ENCODE measurements at regions of chr11 and their contacts with region 1.

Region 1: DNA sequence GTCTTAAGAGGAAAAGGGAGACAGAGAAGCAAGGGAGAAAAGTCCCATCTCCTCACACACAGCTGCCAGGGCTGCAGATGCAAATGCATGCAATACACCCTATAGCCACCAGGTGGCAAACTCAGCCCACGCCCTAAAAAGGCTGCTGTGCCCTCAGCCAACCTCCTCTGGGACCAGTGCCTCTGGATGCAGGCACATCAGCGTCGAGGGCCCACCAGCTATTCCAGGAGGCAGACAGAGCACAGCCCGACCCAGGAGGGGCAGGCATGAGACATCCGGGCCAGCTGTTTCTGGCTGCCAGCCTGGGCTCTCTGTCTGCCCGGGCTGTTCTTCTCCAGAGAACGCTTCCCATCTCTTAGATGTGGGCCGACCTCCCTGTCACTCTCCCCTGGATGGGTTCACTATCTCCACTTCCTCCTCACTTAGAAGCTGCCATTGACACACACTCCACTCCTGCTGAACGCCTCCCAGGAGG is 39.7 kb downstream of the TPBGL start:
- DNase-seq: peak; percentile 69 to 86 (median 82)
- ATAC-seq: peak; percentile 77 to 90 (median 84)
- H3K4me3 ChIP-seq: no peak overlapping the region
- H3K27ac ChIP-seq: peak overlapping the region in 6 of 12 donors; percentile 2 to 43 (median 22)
- H3K4me1 ChIP-seq: peaks cover 0 to 31% (median 14%) of the 10 kb centered on the region in 12 donors
- H3K27me3 ChIP-seq: no peaks in the 10 kb centered on the region
- CTCF ChIP-seq: peak; percentile 93 to 100 (median 99)
- POLR2A ChIP-seq: no peak

Region 2: DNA sequence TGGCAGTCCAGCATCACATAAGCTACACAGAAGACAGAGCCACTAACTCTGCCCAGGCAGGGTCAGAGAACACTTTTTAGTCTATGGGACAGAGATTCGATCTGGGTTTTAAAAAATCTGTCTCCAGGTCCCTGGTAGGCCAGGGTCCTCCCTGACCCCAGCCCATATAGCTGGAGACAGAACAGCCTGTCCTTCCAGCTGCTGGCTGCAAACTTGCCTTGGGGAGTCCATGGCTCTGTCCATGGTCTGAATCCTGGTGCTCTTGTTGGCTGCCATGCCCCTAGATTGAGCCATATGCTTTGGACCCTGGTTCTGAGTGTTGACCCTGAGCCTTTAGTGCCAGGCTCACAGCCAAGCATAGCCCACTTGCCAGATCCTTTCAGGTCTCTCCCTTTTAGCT is 773.4 kb before region 1 on chr11:
- intact Hi-C with region 1: no loop called
- DNase-seq: no peak
- ATAC-seq: no peak
- H3K4me3 ChIP-seq: no peak overlapping the region
- H3K27ac ChIP-seq: no peak overlapping the region
- H3K4me1 ChIP-seq: no peaks in the 10 kb centered on the region
- H3K27me3 ChIP-seq: no peaks in the 10 kb centered on the region
- CTCF ChIP-seq: no peak
- POLR2A ChIP-seq: no peak

Region 3: DNA sequence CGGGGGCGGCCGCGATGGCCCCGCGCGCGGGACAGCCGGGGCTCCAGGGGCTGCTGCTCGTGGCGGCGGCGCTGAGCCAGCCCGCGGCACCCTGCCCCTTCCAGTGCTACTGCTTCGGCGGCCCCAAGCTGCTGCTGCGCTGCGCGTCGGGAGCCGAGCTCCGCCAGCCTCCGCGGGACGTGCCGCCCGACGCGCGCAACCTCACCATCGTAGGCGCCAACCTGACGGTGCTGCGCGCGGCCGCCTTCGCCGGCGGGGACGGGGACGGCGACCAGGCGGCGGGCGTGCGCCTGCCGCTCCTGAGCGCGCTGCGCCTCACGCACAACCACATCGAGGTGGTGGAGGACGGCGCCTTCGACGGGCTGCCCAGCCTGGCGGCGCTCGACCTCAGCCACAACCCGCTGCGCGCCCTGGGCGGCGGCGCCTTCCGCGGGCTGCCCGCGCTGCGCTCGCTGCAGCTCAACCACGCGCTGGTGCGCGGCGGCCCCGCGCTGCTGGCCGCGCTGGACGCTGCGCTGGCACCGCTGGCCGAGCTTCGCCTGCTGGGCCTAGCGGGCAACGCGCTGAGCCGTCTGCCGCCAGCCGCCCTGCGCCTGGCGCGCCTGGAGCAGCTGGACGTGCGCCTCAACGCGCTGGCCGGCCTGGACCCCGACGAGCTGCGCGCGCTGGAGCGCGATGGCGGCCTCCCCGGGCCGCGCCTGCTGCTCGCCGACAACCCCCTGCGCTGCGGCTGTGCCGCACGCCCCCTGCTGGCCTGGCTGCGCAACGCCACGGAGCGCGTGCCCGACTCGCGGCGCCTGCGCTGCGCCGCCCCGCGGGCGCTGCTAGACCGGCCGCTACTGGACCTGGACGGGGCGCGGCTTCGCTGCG is 39.0 kb before region 1 on chr11:
- intact Hi-C with region 1: no loop called
- DNase-seq: peak; percentile 82 to 95 (median 84)
- ATAC-seq: peak; percentile 56 to 97 (median 92)
- H3K4me3 ChIP-seq: peak overlapping the region; percentile 7 to 60 (median 44)
- H3K27ac ChIP-seq: no peak overlapping the region
- H3K4me1 ChIP-seq: peaks cover 0 to 21% (median 5%) of the 10 kb centered on the region in 12 donors
- H3K27me3 ChIP-seq: peaks cover 21 to 59% (median 34%) of the 10 kb centered on the region in 9 donors
- CTCF ChIP-seq: peak; percentile 29 to 99 (median 88)
- POLR2A ChIP-seq: no peak

Region 4: GRCh38 chr11:75319035-75319877 is 39.0 kb after region 1 on chr11:
- intact Hi-C with region 1: loop called in 2 of 10 experiments (anchors 5 kb)
- DNase-seq: peak in 2 of 5 donors; percentile 25 to 42
- ATAC-seq: no peak
- H3K4me3 ChIP-seq: no peak overlapping the region
- H3K27ac ChIP-seq: peak overlapping the region in 1 of 12 donors; percentile 37
- H3K4me1 ChIP-seq: peaks cover 0 to 47% (median 22%) of the 10 kb centered on the region in 12 donors
- H3K27me3 ChIP-seq: no peaks in the 10 kb centered on the region
- CTCF ChIP-seq: no peak
- POLR2A ChIP-seq: no peak

Region 5: DNA sequence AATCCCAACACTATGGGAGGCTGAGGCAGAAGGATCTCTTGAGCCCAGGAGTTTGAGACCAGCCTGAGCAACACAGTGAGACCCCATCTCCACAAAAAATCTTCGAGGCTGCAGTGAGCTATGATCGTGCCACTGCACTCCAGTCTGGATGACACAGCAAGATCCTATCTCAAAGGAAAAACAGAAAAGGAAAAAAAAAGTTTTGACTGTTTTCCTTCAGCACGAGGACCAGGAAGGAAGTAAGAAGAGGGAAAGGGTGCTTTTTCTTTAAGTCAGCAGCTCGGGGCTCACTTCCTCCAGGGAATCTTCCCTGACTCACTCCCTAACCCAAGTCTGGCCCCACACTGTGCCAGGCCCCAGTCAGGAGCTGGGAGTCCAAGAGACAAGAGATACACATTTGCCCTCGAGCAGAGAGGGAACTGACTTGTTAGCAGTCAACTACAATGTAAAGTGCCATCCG is 57.0 kb after region 1 on chr11:
- intact Hi-C with region 1: loop called in 1 of 10 experiments (anchors 5 kb)
- DNase-seq: peak in 1 of 5 donors; percentile 65
- ATAC-seq: peak in 3 of 4 donors; percentile 10 to 19 (median 14)
- H3K4me3 ChIP-seq: no peak overlapping the region
- H3K27ac ChIP-seq: peak overlapping the region in 6 of 12 donors; percentile 8 to 96 (median 67)
- H3K4me1 ChIP-seq: peaks cover 25 to 100% (median 70%) of the 10 kb centered on the region in 12 donors
- H3K27me3 ChIP-seq: no peaks in the 10 kb centered on the region
- CTCF ChIP-seq: no peak
- POLR2A ChIP-seq: no peak

Region 6: DNA sequence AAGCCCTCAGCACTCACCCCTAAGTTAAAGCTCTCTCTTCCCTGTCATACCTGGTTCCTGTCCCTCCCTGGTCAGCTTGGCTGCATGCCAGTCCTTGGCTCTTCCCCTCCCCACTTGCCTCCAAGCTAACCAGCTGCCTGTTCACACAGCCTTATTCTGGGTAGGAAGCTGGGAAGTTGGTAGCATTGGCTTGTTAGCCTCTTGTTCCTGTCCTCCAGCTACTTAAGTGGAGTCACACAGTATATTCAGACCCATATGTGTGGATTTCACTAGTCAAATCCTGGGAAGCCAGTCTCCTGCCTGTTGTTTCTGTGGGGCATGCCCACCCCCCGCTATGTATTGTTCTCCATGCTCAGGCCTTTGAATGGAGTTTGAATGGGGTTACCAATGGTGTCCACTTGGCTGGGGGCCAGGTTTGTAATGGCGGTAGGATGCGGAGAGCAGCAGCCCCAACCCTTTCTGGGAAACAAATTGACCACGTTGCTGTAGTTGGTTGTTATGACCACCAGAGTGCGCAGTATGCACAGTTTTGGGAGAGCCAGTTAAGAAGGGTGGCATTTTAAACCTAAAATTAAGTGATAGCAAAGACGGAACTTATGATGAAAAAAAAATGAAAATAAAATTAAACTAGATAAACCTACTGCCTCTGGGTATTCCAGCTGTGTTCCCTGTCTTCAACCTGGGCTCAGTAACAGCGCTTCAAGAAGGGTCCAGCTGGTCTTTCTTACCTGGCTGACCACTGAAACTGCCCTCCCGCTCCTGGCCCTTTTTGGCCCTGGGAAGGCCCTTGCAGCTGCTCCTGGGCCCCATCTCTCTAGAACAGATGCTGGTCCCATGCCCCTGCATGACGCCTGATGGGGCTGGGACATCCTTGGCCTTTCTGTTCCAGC is 108.4 kb after region 1 on chr11:
- intact Hi-C with region 1: loop called (anchors 1 to 2 kb)
- DNase-seq: peak; percentile 54 to 77 (median 68)
- ATAC-seq: peak; percentile 35 to 76 (median 72)
- H3K4me3 ChIP-seq: no peak overlapping the region
- H3K27ac ChIP-seq: no peak overlapping the region
- H3K4me1 ChIP-seq: peaks cover 0 to 23% (median 5%) of the 10 kb centered on the region in 12 donors
- H3K27me3 ChIP-seq: peaks cover 0 to 4% (median 0%) of the 10 kb centered on the region in 9 donors
- CTCF ChIP-seq: peak; percentile 75 to 88 (median 80)
- POLR2A ChIP-seq: no peak

Region 7: DNA sequence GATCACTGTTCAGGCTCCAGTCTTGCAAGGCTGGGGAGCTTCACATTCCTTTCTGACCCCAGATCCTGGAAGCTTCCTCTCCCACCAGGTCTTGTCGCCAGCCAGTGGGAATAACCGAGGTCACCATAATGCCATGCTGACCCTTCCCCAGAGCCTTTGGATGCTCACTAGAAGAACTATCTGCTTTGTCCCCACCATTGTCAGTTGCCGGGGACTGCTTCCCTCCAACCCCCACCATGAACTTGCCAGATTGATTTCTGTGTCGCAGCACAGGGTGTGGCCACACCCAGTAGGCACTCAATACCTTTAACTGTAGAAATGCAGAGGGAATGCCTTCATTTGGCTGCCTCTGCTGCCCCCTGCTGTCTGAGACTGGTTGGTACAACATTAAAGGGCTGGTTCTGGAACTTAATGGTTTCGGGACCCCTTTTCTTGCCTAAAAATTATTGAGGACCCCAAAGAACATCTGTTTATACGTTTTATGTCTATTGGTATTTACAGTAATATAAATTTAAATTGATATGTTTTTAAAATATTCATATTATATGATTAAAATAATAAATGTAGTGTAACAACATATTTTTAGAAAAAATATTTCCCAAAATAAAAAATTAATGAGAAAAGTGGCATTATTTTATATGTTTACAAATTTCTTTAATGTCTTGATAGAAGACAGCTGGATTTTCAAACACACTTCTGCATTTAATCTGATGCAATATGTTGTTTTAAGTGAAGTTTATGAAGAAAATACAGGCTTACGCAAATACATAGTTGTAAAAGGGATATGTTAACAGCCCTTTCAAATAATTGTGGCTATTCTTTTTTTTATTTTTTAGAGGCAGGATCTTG is 252.2 kb after region 1 on chr11:
- intact Hi-C with region 1: loop called in 5 of 10 experiments (anchors 5 to 10 kb)
- DNase-seq: peak in 4 of 5 donors; percentile 54 to 77 (median 62)
- ATAC-seq: peak; percentile 28 to 58 (median 56)
- H3K4me3 ChIP-seq: no peak overlapping the region
- H3K27ac ChIP-seq: no peak overlapping the region
- H3K4me1 ChIP-seq: peaks cover 0 to 23% (median 7%) of the 10 kb centered on the region in 12 donors
- H3K27me3 ChIP-seq: no peaks in the 10 kb centered on the region
- CTCF ChIP-seq: peak; percentile 83 to 98 (median 90)
- POLR2A ChIP-seq: no peak